Mammary epithelial cell (primary cell): ENCODE measurements at regions of chr17 and their contacts with region 1.

Region 1: GRCh38 chr17:75205037-75205792 is at the start of gene NUP85:
- DNase-seq: peak; percentile 91
- H3K4me3 ChIP-seq: peak within 1 kb of the TSS; percentile 67 to 98 (median 96)
- H3K27ac ChIP-seq: peak within 1 kb of the TSS; percentile 91
- H3K4me1 ChIP-seq: no peaks in the 10 kb centered on the region
- H3K27me3 ChIP-seq: no peaks in the 10 kb centered on the region
- CTCF ChIP-seq: no peak
- total RNA-seq, gene NUP85: 28.2 to 60.8 TPM

Region 2: GRCh38 chr17:75069783-75070182 is 135.4 kb before region 1 on chr17:
- CTCF ChIA-PET with region 1: interaction called, 5 read pairs
- dilution Hi-C with region 1: no loop called
- in situ Hi-C with region 1: no loop called
- intact Hi-C with region 1: loop called (anchors 1 kb)
- DNase-seq: no peak
- H3K4me3 ChIP-seq: no peak overlapping the region
- H3K27ac ChIP-seq: no peak overlapping the region
- H3K4me1 ChIP-seq: peaks cover 3% of the 10 kb centered on the region
- H3K27me3 ChIP-seq: no peaks in the 10 kb centered on the region
- CTCF ChIP-seq: peak; percentile 34 to 63

Region 3: GRCh38 chr17:75131280-75132017 is 73.8 kb before region 1 on chr17 and contains the start of gene NT5C:
- CTCF ChIA-PET with region 1: no interaction called
- dilution Hi-C with region 1: loop called (anchors 5 kb)
- in situ Hi-C with region 1: no loop called
- intact Hi-C with region 1: no loop called
- DNase-seq: peak; percentile 69
- H3K4me3 ChIP-seq: peak within 1 kb of the TSS; percentile 72 to 97 (median 87)
- H3K27ac ChIP-seq: peak within 1 kb of the TSS; percentile 67
- H3K4me1 ChIP-seq: peaks cover 25% of the 10 kb centered on the region
- H3K27me3 ChIP-seq: no peaks in the 10 kb centered on the region
- CTCF ChIP-seq: peak; percentile 26 to 69
- total RNA-seq, gene NT5C: 45.7 to 65.7 TPM

Region 4: DNA sequence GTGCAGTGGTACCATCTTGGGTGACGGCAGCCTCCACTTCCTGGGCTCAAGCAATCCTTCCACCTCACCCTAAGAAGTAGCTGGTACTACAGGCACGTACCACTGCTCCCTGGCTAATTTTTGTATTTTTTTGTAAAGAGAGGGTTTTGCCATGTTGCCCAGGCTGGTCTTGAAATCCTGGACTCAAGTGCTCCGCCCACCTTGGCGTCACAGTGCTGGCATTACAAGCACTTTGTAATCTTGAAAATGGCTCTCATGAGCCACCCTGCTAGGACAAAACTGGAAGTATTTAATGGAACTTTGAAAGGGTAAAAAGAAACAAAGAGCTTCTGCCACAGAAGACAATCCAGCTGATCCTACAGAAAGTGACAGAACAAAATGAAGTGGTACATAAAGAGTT is 31.7 kb before region 1 on chr17:
- CTCF ChIA-PET with region 1: no interaction called
- dilution Hi-C with region 1: no loop called
- in situ Hi-C with region 1: no loop called
- intact Hi-C with region 1: loop called (anchors 2 kb)
- DNase-seq: no peak
- H3K4me3 ChIP-seq: no peak overlapping the region
- H3K27ac ChIP-seq: no peak overlapping the region
- H3K4me1 ChIP-seq: no peaks in the 10 kb centered on the region
- H3K27me3 ChIP-seq: no peaks in the 10 kb centered on the region
- CTCF ChIP-seq: no peak

Region 5: DNA sequence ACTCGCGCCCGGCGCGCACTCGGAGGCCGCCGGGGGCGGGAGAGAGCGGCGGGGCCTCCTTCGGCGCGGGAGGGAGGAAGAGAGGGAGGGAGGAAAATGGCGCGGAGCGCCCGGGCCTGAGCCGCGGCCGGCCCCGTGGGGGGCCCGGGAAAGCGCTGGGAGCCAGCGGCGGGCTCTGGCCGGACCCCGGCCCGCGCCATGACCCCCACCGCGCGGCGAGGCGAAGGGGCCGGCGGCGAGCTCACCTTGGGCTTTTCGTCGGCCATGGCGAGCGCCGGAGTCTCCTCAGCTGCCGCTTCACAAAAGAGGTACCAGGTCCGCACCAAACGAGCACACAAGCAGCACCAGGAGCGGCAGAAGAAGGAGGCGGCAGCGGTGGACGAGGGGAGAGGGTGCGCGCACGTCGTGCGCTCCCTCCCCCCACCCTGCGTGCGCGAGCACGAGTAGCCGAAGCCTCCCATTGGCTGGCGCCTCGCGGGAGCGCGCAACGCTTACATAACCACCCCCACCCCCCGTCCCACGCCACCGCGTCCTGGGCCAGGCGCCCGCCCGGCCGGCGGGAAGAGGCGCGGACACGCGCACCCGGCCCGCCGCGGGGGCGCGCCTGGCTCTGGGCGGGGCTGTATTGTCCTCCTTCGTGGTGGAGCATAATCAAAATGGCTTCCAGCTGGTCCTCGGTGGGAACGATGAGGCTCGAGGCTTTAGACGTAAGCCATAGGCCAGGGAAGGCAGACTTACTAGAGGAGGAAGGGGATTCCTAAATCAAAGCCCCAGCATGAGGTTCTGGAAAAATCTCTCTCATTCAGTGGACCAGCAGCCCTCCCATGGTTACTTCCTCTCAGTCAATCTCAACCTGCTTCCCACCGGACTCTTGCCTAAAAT is 22.4 kb before region 1 on chr17 and contains the start of gene SUMO2:
- CTCF ChIA-PET with region 1: interaction called, 4 read pairs
- dilution Hi-C with region 1: no loop called
- in situ Hi-C with region 1: no loop called
- intact Hi-C with region 1: loop called (anchors 2 kb)
- DNase-seq: peak; percentile 92
- H3K4me3 ChIP-seq: peak within 1 kb of the TSS; percentile 59 to 97 (median 76)
- H3K27ac ChIP-seq: peak within 1 kb of the TSS; percentile 83
- H3K4me1 ChIP-seq: peaks cover 10% of the 10 kb centered on the region
- H3K27me3 ChIP-seq: no peaks in the 10 kb centered on the region
- CTCF ChIP-seq: peak in 1 of 2 donors; percentile 45
- total RNA-seq, gene SUMO2: 49.7 to 279 TPM